ENCODE measurements at regions of chr6 and their contacts with region 1.

Region 1: DNA sequence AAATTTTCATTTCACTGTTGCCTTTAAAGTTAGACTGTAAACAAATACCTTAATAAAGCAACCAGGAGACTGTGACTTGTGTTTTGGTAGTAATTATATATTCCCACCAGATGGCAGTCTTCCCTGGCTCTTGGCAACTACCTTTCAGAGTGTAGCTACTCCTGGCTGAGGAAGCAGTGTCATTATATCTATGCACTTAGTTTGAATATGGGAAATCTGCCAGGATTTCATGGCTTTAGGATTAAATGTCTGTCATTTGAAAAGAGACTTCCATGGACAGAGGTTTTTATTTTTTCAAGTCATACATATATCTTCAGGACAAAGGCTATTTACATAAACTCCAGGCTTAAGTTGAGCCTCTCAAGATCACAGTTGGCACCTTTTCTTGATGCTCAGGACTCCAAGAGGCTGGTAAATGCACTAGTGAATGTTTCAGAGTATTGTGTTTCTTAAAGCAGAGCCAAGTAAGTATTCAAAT is 160.1 kb downstream of the C6orf58 start:
- DNase-seq: peak in 7 of 9 experiments; percentile 4 to 84 (median 41)
- ATAC-seq: peak; percentile 96
- H3K4me3 ChIP-seq: no peak overlapping the region
- H3K4me3 Mint-ChIP-seq: no peak overlapping the region
- H3K27ac ChIP-seq: peak overlapping the region in 1 of 2 experiments; percentile 21
- H3K27ac Mint-ChIP-seq: peak overlapping the region; percentile 69
- H3K4me1 ChIP-seq: peaks cover 31% of the 10 kb centered on the region
- H3K4me1 Mint-ChIP-seq: peaks cover 67% of the 10 kb centered on the region
- H3K27me3 ChIP-seq: no peaks in the 10 kb centered on the region
- H3K27me3 Mint-ChIP-seq: no peaks in the 10 kb centered on the region
- CTCF ChIP-seq: peak; percentile 84

Region 2: DNA sequence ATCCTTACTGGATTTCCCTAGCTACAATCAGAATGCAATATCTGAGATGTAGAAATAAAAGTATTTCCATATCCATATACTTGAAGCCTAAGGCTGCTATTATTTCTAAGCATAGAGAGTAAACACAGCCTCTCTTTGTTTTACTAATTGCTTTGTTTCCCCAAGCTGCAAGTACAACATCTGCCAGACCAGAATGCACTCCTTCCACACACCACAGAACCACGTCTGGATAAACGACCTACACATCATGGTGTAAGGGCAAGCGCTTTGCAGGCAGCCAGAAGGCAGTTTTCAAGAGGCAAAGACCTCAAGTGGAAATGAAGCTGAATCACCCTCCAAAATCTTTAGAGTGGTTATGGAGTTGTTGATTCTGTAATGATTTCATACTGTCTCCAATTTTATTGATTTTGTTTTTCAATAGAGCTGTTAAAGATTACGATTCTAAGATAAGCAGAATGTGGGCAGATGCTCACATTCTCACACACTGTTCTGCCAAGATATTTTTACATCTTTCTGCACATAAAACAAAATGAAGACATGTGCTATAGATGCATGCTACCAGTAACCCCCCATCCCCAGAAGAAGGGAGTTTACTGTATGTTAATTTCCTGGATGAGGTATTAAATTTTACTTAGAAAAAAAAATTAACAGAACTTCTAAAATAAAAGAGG is 75.0 kb after region 1 on chr6:
- CTCF ChIA-PET with region 1: interaction called, 3 read pairs
- POLR2A ChIA-PET with region 1: no interaction called
- intact Hi-C with region 1: loop called in 1 of 2 experiments (anchors 5 kb)
- DNase-seq: peak in 3 of 9 experiments; percentile 32 to 39 (median 39)
- ATAC-seq: peak; percentile 30
- H3K4me3 ChIP-seq: no peak overlapping the region
- H3K4me3 Mint-ChIP-seq: peak overlapping the region; percentile 50
- H3K27ac ChIP-seq: no peak overlapping the region
- H3K27ac Mint-ChIP-seq: peak overlapping the region; percentile 89
- H3K4me1 ChIP-seq: peaks cover 89% of the 10 kb centered on the region
- H3K4me1 Mint-ChIP-seq: peaks cover 93% of the 10 kb centered on the region
- H3K27me3 ChIP-seq: no peaks in the 10 kb centered on the region
- H3K27me3 Mint-ChIP-seq: no peaks in the 10 kb centered on the region
- CTCF ChIP-seq: no peak

Region 3: DNA sequence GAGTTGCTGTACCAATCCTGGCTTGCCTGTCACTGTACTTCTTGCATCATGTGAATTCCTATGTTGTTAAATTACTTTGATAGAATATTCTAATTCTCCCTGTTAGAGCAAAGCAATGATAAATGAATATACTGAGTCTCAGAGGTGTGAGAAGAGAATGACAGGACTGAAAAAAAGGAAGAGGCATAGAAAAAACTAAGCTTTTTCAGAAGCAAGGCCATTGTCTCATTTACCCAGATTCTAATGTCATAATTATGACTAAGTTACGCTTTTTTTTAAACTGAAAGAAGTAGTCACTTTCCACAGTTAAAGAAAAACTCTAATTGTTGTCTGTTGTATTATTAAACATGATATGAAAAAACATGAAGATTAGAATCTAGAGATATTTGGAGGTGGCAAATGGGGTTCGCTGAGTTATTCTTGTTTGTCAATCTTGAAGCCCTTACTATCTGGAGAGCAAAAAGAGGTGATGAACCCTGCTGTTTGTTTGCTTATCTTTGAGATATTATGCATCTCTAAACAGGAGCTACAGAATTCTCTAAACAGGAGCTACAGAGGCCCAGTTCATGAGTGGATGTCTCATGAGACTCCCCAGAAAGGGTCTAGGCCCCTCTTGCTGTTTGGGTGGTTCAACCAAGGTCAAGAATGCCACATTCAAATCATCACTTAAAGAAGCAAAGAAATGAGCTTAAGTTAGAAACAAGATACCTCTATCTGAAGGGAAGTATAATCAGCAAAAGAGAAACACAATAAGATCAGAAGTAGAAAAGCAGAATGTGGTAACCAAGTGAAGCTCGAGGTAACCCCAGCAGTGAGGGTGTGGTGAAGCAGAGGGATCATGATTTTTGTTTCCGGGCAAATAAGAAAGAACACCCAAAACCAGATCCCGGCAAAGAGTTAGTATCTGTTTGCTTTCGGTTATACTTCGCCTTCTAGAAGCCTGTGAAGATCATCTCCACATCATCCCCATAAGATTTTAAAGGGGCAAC is 197.1 kb after region 1 on chr6:
- CTCF ChIA-PET with region 1: no interaction called
- POLR2A ChIA-PET with region 1: no interaction called
- intact Hi-C with region 1: no loop called
- DNase-seq: peak; percentile 5 to 84 (median 47)
- ATAC-seq: peak; percentile 92
- H3K4me3 ChIP-seq: peak overlapping the region in 1 of 2 experiments; percentile 21
- H3K4me3 Mint-ChIP-seq: peak overlapping the region; percentile 67
- H3K27ac ChIP-seq: peak overlapping the region; percentile 40 to 81
- H3K27ac Mint-ChIP-seq: peak overlapping the region; percentile 85
- H3K4me1 ChIP-seq: peaks cover 57% of the 10 kb centered on the region
- H3K4me1 Mint-ChIP-seq: peaks cover 60% of the 10 kb centered on the region
- H3K27me3 ChIP-seq: no peaks in the 10 kb centered on the region
- H3K27me3 Mint-ChIP-seq: no peaks in the 10 kb centered on the region
- CTCF ChIP-seq: no peak

Region 4: DNA sequence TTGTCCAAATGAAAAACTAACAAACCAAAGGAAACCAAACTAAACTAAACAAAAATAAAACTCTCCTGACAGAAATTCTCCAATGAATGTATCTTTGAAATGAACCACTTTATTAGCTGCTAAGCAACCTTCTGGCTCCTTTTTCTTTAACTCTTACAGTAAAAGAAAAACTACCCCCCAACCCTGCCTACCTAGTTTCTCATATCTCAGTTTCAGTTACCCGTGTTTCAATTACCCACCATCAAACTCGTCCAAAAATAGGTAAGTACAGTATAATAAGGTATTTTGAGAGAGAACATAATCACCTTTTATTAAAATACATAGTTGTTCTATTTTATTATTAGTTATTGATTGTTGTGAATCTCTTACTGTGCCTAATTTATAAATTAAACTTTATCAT is 341.2 kb after region 1 on chr6:
- CTCF ChIA-PET with region 1: no interaction called
- POLR2A ChIA-PET with region 1: no interaction called
- intact Hi-C with region 1: no loop called
- DNase-seq: no peak
- ATAC-seq: no peak
- H3K4me3 ChIP-seq: no peak overlapping the region
- H3K4me3 Mint-ChIP-seq: no peak overlapping the region
- H3K27ac ChIP-seq: no peak overlapping the region
- H3K27ac Mint-ChIP-seq: no peak overlapping the region
- H3K4me1 ChIP-seq: no peaks in the 10 kb centered on the region
- H3K4me1 Mint-ChIP-seq: no peaks in the 10 kb centered on the region
- H3K27me3 ChIP-seq: no peaks in the 10 kb centered on the region
- H3K27me3 Mint-ChIP-seq: no peaks in the 10 kb centered on the region
- CTCF ChIP-seq: no peak

Region 5: DNA sequence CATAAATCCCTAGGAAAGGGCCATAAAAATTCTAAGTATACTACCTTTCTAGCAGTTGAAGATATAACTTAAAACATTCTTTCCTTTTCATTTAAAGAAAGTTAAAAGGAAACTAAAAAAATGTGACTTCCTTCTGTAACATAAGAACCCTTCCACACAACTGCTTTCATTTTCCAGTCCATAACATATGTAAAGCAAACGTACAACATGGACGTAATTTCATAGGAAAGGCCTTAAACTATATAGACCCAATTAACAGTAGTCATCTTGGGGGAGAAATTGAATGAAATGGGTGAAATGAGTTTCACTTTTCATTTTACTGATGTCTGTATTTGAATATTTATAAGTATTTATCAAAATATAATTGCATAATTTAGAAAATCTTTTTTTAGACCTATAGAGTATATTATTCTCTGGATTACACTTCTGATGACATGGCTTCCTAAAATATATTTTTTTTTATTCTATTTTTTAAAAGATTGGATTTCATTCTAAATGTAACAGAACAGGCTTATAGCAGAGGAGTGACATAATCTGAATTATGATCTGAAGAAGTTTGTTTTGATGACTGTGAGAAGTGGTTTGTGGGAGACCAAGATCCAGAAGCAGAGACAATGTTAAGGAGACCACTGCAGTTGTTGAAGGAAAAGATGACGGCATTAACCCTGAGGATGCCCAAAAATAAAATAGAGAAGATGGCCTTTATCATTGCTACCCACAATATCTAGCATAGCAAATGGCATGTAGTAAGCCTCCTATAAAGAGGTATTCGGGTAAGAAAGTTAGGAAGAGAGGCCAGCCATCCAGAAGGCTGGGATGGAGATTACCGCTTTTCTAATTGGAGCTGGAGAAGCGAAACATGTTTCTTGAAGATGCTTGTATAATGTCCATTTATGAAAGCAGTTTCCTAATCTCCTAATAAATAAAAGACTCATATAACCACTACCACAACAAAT is 523.0 kb after region 1 on chr6:
- CTCF ChIA-PET with region 1: no interaction called
- POLR2A ChIA-PET with region 1: no interaction called
- intact Hi-C with region 1: loop called in 1 of 2 experiments (anchors 10 kb)
- DNase-seq: peak in 2 of 9 experiments; percentile 31 to 63
- ATAC-seq: peak; percentile 77
- H3K4me3 ChIP-seq: peak overlapping the region; percentile 31 to 42
- H3K4me3 Mint-ChIP-seq: peak overlapping the region; percentile 83
- H3K27ac ChIP-seq: peak overlapping the region; percentile 49 to 69
- H3K27ac Mint-ChIP-seq: peak overlapping the region; percentile 89
- H3K4me1 ChIP-seq: peaks cover 18% of the 10 kb centered on the region
- H3K4me1 Mint-ChIP-seq: peaks cover 29% of the 10 kb centered on the region
- H3K27me3 ChIP-seq: no peaks in the 10 kb centered on the region
- H3K27me3 Mint-ChIP-seq: no peaks in the 10 kb centered on the region
- CTCF ChIP-seq: no peak

Region 6: DNA sequence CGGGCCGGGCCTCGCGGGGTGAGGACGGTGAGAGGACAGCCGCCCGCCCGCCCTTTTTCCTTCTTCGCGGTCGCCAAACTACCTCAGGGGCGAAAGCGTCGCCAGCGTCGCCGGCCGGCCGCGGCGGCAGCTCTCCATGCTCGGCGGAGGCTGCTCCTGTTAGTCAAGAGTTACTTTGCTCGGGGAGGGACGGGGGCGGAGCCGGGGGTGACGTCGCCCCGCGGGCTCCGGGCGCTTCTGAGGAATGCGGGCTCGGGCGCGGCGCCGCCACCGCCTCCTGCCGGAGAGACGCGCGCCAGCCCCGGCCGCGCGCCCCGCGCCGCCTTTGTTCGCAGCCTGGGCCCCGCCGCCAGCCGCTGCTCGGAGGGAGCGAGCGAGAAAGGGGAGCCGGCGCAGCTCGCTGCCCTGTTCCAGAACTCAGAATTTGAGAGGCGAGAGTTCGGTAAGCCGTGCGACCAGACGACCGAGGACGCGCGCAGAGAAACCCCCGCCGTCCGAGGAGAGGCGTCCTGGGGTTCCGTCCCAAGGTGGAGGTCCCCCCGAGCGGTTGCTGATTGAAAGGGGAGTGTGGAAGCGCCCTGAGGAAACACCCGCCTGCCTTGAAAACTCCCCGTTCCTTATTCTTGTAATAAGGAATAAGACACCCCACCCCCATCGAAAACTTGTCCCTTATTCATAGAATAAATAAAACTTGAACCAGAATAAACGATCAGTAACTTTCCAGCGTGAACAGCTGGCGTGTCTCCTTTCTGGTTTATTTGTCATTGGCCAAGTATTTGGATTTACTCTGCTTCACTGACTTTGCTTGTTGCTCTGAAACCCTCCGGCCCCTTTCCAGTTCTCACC is 783.6 kb after region 1 on chr6 and contains the start of gene PTPRK:
- CTCF ChIA-PET with region 1: interaction called, 8 read pairs
- POLR2A ChIA-PET with region 1: no interaction called
- intact Hi-C with region 1: loop called (anchors 1 to 2 kb)
- DNase-seq: peak; percentile 69 to 92 (median 89)
- ATAC-seq: peak; percentile 85
- H3K4me3 ChIP-seq: peak within 1 kb of the TSS; percentile 66 to 92
- H3K4me3 Mint-ChIP-seq: peak within 1 kb of the TSS; percentile 97
- H3K27ac ChIP-seq: peak within 1 kb of the TSS; percentile 17 to 61
- H3K27ac Mint-ChIP-seq: peak within 1 kb of the TSS; percentile 94
- H3K4me1 ChIP-seq: peaks cover 4% of the 10 kb centered on the region
- H3K4me1 Mint-ChIP-seq: peaks cover 19% of the 10 kb centered on the region
- H3K27me3 ChIP-seq: peaks cover 5 to 18% of the 10 kb centered on the region in 2 experiments
- H3K27me3 Mint-ChIP-seq: peaks cover 41% of the 10 kb centered on the region
- CTCF ChIP-seq: peak; percentile 44
- total RNA-seq, gene PTPRK: 17.2 to 18.6 TPM

Region 7: DNA sequence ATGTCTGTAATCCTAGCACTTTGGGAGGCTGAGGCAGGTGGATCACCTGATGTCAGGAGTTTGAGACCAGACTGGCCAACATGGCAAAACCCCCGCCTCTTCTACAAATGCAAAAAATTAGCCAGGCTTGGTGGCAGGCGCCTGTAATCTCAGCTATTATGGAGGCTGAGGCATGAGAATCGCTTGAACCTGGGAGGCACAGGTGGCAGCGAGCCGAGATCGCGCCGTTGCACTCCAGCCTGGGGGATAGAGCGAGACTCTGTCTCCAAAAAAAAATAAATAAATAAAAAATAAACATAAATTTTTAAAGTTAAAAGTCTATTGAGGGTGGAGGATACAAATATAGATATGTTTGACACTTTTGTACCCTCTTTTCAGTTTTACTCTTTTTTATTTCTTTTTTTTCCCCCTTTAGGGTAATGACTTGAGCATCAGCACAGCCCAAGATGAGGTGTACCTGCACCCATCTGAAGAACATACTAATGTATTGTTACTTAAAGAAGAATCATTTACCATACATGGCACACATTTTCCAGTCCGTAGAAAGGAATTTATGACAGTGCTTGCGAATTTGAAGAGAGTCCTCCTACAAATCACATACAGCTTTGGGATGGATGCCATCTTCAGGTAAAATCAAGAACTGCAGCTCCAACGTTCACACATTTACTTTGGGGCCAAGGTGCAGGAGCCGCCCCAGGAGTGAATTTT is 1514.8 kb after region 1 on chr6:
- CTCF ChIA-PET with region 1: no interaction called
- POLR2A ChIA-PET with region 1: no interaction called
- intact Hi-C with region 1: loop called in 1 of 2 experiments (anchors 2 kb)
- DNase-seq: peak in 5 of 9 experiments; percentile 2 to 70 (median 33)
- ATAC-seq: peak; percentile 48
- H3K4me3 ChIP-seq: no peak overlapping the region
- H3K4me3 Mint-ChIP-seq: no peak overlapping the region
- H3K27ac ChIP-seq: no peak overlapping the region
- H3K27ac Mint-ChIP-seq: no peak overlapping the region
- H3K4me1 ChIP-seq: no peaks in the 10 kb centered on the region
- H3K4me1 Mint-ChIP-seq: peaks cover 3% of the 10 kb centered on the region
- H3K27me3 ChIP-seq: peaks cover 0 to 7% of the 10 kb centered on the region in 2 experiments
- H3K27me3 Mint-ChIP-seq: peaks cover 17% of the 10 kb centered on the region
- CTCF ChIP-seq: peak; percentile 70